ENCODE measurements at regions of chr16 and their contacts with region 1.

Region 1: DNA sequence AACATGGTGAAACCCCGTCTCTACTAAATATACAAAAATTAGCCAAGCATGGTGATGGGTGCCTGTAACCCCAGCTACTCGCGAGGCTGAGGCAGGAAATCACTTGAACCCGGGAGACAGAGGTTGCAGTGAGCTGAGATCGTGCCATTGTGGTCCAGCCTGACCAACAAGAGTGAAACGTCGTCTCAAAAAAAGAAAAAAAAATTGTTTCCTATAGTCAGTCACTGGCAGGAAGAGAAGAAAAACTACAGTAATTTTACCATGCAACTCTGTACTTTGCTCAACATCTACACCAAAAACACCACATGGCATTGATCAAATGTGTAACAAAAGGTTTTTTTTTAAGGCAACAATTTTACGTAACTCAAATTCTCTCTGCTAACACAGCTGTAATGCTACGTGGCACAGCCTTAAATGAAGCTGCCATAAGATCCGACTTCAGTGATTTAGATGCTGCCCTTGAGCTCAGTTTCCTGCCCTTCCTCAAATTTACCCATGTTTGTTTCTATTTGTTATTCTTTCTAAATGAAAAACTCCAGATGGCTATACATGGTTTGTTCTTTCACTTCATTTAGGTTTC is 40.2 kb downstream of the CNOT1 start:
- DNase-seq: peak; percentile 68
- ATAC-seq: peak; percentile 58
- H3K4me3 Mint-ChIP-seq: no peak overlapping the region
- H3K27ac Mint-ChIP-seq: peak overlapping the region; percentile 79
- H3K4me1 Mint-ChIP-seq: peaks cover 37% of the 10 kb centered on the region
- H3K27me3 Mint-ChIP-seq: no peaks in the 10 kb centered on the region

Region 2: GRCh38 chr16:58605562-58605961 is 16.1 kb after region 1 on chr16:
- CTCF ChIA-PET with region 1: interaction called, 10 read pairs
- DNase-seq: no peak
- ATAC-seq: no peak
- H3K4me3 Mint-ChIP-seq: no peak overlapping the region
- H3K27ac Mint-ChIP-seq: no peak overlapping the region
- H3K4me1 Mint-ChIP-seq: peaks cover 28% of the 10 kb centered on the region
- H3K27me3 Mint-ChIP-seq: no peaks in the 10 kb centered on the region